PC-9 (cell line): ENCODE measurements at regions of chr11 and their contacts with region 1.

Region 1: DNA sequence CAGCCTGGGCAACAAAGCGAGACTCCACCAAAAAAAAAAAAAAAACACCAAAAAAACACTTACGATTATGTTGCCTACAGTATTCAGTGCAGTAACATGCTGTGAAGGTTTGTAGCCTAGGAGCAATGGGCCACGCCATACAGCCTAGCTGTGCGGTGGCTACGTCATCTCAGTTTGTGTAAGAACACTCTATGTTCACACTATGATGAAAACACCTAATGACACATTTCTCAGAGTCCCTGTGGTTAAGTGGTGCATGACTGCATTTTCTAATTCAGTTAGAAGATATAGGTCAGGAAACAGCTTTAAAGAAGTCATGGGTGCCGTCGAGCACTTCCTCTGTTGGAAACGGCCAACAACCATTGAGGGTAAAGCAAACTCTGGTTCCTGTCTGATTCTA is 75.7 kb upstream of the ANO1 start:
- DNase-seq: no peak
- H3K4me3 ChIP-seq: no peak overlapping the region
- H3K27ac ChIP-seq: no peak overlapping the region
- H3K4me1 ChIP-seq: peaks cover 20% of the 10 kb centered on the region
- H3K27me3 ChIP-seq: no peaks in the 10 kb centered on the region
- CTCF ChIP-seq: no peak

Region 2: GRCh38 chr11:69899957-69900821 is 102.2 kb before region 1 on chr11:
- CTCF ChIA-PET with region 1: no interaction called
- POLR2A ChIA-PET with region 1: interaction called, 12 read pairs
- intact Hi-C with region 1: no loop called
- DNase-seq: peak; percentile 92 to 98
- H3K4me3 ChIP-seq: peak overlapping the region; percentile 11; the same call in 1 of the 2 replicates
- H3K27ac ChIP-seq: peak overlapping the region; percentile 78
- H3K4me1 ChIP-seq: peaks cover 72% of the 10 kb centered on the region
- H3K27me3 ChIP-seq: no peaks in the 10 kb centered on the region
- CTCF ChIP-seq: 0 out of 2 replicates have a peak, but pooled peaks have one; percentile 21

Region 3: DNA sequence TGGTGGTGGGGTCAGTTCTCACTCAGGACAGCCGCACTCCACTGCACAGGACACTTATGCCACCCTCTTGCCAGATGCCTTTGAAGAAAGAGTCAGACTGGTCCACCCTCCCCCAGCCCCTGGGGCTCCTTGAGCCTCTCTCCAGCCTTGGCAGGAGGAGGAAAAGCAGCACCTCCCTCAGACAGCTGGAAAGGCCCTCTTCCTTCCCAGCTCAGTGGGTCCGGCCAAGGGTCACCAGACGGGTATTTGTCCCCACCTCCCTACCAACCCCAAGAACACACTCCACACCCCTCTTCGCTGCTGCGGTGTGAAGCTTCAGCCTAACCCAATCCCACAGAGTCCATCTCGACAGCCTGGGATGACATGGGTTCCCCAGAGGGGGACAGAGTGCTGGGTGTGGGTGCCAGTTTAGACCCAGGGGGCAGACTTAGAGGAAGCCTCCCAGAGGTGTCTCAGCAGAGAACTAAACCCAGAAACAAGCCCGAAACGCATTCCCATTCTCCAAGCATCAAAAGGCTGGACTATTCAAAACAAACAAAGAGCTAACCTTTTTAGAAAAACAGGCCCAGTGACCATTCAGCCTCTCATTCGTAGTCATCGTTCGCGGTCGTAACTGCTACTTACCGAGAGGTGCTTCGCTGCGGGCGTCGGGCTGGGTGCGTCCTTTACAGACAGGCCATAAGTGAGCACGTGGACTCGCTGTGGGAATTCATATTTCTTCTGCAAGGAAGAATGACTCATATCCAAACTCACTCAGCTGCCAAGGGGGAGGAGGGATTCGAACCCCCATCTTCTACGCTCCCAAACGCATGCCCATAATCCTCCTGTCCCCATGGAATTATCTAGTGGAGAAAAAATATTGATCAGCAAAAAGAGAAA is 18.1 kb after region 1 on chr11:
- CTCF ChIA-PET with region 1: no interaction called
- POLR2A ChIA-PET with region 1: no interaction called
- intact Hi-C with region 1: no loop called
- DNase-seq: no peak
- H3K4me3 ChIP-seq: no peak overlapping the region
- H3K27ac ChIP-seq: no peak overlapping the region
- H3K4me1 ChIP-seq: peaks cover 49% of the 10 kb centered on the region
- H3K27me3 ChIP-seq: no peaks in the 10 kb centered on the region
- CTCF ChIP-seq: no peak